Naive thymus-derived CD4-positive, alpha-beta T cell (primary cell): ENCODE measurements at regions of chr1 and their contacts with region 1.

Region 1: GRCh38 chr1:52636721-52637695 is 4.0 kb downstream of the SHISAL2A start:
- DNase-seq: peak; percentile 39 to 88 (median 83)
- ATAC-seq: peak; percentile 79
- H3K4me3 ChIP-seq: peak overlapping the region; percentile 19
- H3K4me3 Mint-ChIP-seq: peak overlapping the region; percentile 78 to 94 (median 86)
- H3K27ac ChIP-seq: peak overlapping the region; percentile 95
- H3K27ac Mint-ChIP-seq: peak overlapping the region; percentile 96 to 100 (median 99)
- H3K4me1 ChIP-seq: peaks cover 63 to 82% of the 10 kb centered on the region in 2 donors
- H3K4me1 Mint-ChIP-seq: peaks cover 52 to 85% (median 79%) of the 10 kb centered on the region in 7 donors
- H3K27me3 ChIP-seq: no peaks in the 10 kb centered on the region
- H3K27me3 Mint-ChIP-seq: peaks cover 0 to 11% (median 0%) of the 10 kb centered on the region in 5 donors

Region 2: DNA sequence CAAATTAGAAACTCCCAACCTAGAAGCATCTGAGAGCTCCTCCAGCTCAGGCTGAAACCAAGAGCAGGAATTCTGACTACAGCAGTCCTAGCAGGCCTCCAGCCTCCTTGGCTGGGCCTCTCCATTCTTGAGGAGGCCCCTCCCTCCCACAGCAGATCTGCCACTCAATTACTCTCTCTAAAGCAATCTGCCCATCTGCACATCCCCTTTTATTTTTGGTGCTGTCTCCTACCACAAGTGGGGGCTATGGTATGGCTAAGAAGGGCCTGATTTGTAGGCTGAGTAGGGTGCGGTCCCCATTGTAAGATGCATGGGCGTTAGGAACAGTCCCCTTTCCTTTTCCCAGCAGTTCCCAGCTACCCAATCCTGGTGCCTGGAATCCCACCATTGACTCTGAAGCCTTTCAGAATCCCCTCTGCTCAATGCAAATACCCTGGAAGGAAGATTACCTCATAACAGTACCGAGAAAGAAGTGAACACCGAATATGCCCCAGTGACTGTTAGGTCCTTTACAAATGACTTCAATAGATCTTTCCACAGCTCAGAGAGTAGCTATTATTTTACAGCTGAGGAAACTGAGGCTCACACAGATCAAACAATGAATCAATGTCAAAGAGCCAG is 1295.0 kb before region 1 on chr1:
- CTCF ChIA-PET with region 1: no interaction called
- POLR2A ChIA-PET with region 1: no interaction called
- intact Hi-C with region 1: no loop called
- DNase-seq: no peak
- ATAC-seq: no peak
- H3K4me3 ChIP-seq: no peak overlapping the region
- H3K4me3 Mint-ChIP-seq: no peak overlapping the region
- H3K27ac ChIP-seq: no peak overlapping the region
- H3K27ac Mint-ChIP-seq: peak overlapping the region in 1 of 9 donors; percentile 49
- H3K4me1 ChIP-seq: no peaks in the 10 kb centered on the region
- H3K4me1 Mint-ChIP-seq: peaks cover 0 to 10% (median 3%) of the 10 kb centered on the region in 7 donors
- H3K27me3 ChIP-seq: peaks cover 0 to 14% of the 10 kb centered on the region in 2 donors
- H3K27me3 Mint-ChIP-seq: peaks cover 46 to 59% (median 48%) of the 10 kb centered on the region in 5 donors

Region 3: DNA sequence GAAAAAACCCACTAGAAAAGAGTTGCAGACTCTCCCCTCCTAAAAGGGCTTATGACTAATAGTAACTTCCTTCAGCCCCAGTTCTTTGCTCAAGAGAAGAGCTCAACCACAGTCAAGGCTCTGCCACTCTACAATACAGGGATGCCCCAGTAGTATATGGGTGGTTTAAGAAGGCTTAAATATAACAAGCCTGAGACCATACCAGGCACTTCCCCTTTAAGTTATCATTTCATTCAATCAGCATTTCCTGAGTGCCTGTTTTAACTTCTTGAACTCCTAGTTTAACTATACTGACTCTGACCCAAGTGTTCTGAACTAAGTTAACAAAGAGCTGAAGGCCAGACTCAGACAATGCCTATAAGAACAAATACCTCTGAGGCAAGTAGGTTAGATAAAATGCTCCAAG is 212.8 kb before region 1 on chr1:
- CTCF ChIA-PET with region 1: no interaction called
- POLR2A ChIA-PET with region 1: interaction called, 7 read pairs
- intact Hi-C with region 1: loop called in 1 of 2 experiments (anchors 1 kb)
- DNase-seq: peak in 7 of 9 donors; percentile 38 to 71 (median 57)
- ATAC-seq: peak; percentile 93
- H3K4me3 ChIP-seq: peak overlapping the region; percentile 14
- H3K4me3 Mint-ChIP-seq: peak overlapping the region; percentile 49 to 81 (median 74)
- H3K27ac ChIP-seq: peak overlapping the region; percentile 63
- H3K27ac Mint-ChIP-seq: peak overlapping the region; percentile 85 to 96 (median 91)
- H3K4me1 ChIP-seq: peaks cover 35 to 45% of the 10 kb centered on the region in 2 donors
- H3K4me1 Mint-ChIP-seq: peaks cover 33 to 72% (median 51%) of the 10 kb centered on the region in 7 donors
- H3K27me3 ChIP-seq: no peaks in the 10 kb centered on the region
- H3K27me3 Mint-ChIP-seq: no peaks in the 10 kb centered on the region

Region 4: DNA sequence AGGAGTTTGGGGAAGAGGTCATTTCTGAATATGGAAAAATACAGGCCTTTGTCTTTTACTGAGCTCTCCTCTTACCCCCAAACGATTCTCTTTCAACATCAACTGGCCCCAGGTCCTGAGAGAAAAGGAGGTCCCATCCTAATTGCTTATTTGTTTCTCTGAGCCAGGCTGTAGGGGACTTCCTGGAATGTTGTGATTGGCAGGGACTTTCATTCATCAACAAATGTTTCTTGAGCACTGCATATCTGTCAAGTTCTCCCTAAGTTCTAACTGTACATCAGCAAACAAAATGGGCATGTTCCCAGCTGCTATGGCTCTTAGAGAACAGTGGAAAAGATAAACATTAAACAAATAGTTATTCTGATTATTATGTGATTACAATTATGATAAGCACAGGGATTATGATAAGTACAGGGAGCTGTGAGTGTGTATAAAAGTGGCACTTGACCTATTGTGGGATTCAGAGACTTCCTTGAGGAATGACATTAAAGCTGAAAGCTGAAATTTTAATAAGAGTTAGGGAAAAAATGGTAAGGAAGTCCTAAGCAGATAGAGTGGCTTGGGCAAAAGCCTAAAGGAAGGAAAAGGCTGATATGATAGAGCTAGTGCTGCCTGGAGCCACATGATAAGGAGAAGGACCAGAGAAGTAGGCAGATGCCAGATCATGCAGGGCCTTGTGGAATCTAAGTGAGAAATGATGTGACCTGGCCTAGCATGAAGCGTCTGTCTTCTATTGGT is 23.2 kb before region 1 on chr1:
- CTCF ChIA-PET with region 1: no interaction called
- POLR2A ChIA-PET with region 1: interaction called, 104 read pairs
- intact Hi-C with region 1: no loop called
- DNase-seq: no peak
- ATAC-seq: no peak
- H3K4me3 ChIP-seq: no peak overlapping the region
- H3K4me3 Mint-ChIP-seq: no peak overlapping the region
- H3K27ac ChIP-seq: no peak overlapping the region
- H3K27ac Mint-ChIP-seq: peak overlapping the region; percentile 25 to 82 (median 61)
- H3K4me1 ChIP-seq: no peaks in the 10 kb centered on the region
- H3K4me1 Mint-ChIP-seq: peaks cover 8 to 44% (median 35%) of the 10 kb centered on the region in 7 donors
- H3K27me3 ChIP-seq: no peaks in the 10 kb centered on the region
- H3K27me3 Mint-ChIP-seq: no peaks in the 10 kb centered on the region

Region 5: DNA sequence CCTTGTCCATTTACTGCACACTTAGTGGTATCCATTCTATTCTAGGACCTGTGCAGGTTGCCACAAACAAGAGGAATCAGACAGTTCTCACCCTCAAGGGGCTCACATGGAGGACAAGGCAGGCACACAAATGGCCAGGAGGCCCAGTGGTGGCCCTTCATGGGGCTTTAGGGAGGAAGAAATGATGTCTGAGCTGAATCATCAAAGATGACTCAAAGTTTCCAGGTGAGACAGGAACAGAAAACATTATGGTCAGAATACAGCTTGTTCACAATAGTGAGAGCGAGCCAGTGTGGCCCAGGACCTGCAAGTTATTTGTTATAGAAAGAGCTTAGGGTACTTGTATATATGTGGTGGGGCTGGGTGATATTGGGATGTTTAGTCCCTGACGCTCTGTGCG is 22.3 kb after region 1 on chr1:
- CTCF ChIA-PET with region 1: no interaction called
- POLR2A ChIA-PET with region 1: interaction called, 4 read pairs
- intact Hi-C with region 1: loop called in 1 of 2 experiments (anchors 1 kb)
- DNase-seq: peak in 1 of 9 donors; percentile 43
- ATAC-seq: no peak
- H3K4me3 ChIP-seq: no peak overlapping the region
- H3K4me3 Mint-ChIP-seq: no peak overlapping the region
- H3K27ac ChIP-seq: no peak overlapping the region
- H3K27ac Mint-ChIP-seq: peak overlapping the region; percentile 43 to 88 (median 64)
- H3K4me1 ChIP-seq: no peaks in the 10 kb centered on the region
- H3K4me1 Mint-ChIP-seq: peaks cover 0 to 30% (median 18%) of the 10 kb centered on the region in 7 donors
- H3K27me3 ChIP-seq: no peaks in the 10 kb centered on the region
- H3K27me3 Mint-ChIP-seq: no peaks in the 10 kb centered on the region

Region 6: DNA sequence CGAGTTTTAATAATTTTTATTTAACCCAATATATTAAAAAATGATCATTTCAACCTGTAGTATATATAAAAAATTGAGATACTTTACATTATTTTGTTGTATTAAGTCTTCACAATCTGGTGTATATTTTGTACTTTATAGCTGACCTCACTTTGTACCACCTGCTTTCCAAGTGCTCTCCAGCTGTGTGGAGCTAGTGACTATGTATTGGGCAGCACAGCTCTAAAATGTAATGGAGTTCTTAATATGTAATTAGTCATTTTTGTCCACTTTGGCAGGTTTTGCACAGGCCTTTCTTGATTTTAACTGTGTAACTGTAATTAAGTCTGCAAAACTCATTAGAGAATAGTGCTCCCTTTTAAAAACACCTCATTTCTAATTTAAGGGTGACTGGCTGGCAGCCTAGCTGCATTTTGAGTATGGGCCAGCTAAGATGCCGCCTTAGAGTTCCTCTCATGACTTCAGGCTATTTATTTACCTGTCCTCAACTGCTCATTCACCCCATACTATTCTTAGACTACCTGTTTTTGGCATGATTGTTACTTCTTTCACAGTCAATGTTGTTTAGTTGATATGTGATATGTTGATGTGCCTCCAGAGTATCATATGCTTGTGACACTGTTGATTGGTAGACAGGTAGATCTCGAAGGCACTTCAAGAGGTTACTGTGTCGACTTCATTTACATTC is 132.5 kb after region 1 on chr1:
- CTCF ChIA-PET with region 1: no interaction called
- POLR2A ChIA-PET with region 1: no interaction called
- intact Hi-C with region 1: no loop called
- DNase-seq: no peak
- ATAC-seq: no peak
- H3K4me3 ChIP-seq: no peak overlapping the region
- H3K4me3 Mint-ChIP-seq: no peak overlapping the region
- H3K27ac ChIP-seq: no peak overlapping the region
- H3K27ac Mint-ChIP-seq: no peak overlapping the region
- H3K4me1 ChIP-seq: peaks cover 0 to 5% of the 10 kb centered on the region in 2 donors
- H3K4me1 Mint-ChIP-seq: peaks cover 9 to 35% (median 19%) of the 10 kb centered on the region in 7 donors
- H3K27me3 ChIP-seq: no peaks in the 10 kb centered on the region
- H3K27me3 Mint-ChIP-seq: no peaks in the 10 kb centered on the region

Region 7: GRCh38 chr1:52927212-52928014 is 290.4 kb after region 1 on chr1 and contains the start of gene SCP2:
- CTCF ChIA-PET with region 1: no interaction called
- POLR2A ChIA-PET with region 1: no interaction called
- intact Hi-C with region 1: loop called in 1 of 2 experiments (anchors 10 kb)
- DNase-seq: peak; percentile 64 to 83 (median 75)
- ATAC-seq: peak; percentile 96
- H3K4me3 ChIP-seq: peak within 1 kb of the TSS; percentile 87
- H3K4me3 Mint-ChIP-seq: peak within 1 kb of the TSS; percentile 82 to 96 (median 88)
- H3K27ac ChIP-seq: peak within 1 kb of the TSS; percentile 77
- H3K27ac Mint-ChIP-seq: peak within 1 kb of the TSS; percentile 33 to 93 (median 75)
- H3K4me1 ChIP-seq: peaks cover 4 to 7% of the 10 kb centered on the region in 2 donors
- H3K4me1 Mint-ChIP-seq: peaks cover 16 to 41% (median 27%) of the 10 kb centered on the region in 7 donors
- H3K27me3 ChIP-seq: no peaks in the 10 kb centered on the region
- H3K27me3 Mint-ChIP-seq: peaks cover 0 to 6% (median 0%) of the 10 kb centered on the region in 5 donors
- total RNA-seq, gene SCP2: 39.4 to 88.7 (median 48.3) TPM